ENCODE measurements at regions of chr7 and their contacts with region 1.

Region 1: DNA sequence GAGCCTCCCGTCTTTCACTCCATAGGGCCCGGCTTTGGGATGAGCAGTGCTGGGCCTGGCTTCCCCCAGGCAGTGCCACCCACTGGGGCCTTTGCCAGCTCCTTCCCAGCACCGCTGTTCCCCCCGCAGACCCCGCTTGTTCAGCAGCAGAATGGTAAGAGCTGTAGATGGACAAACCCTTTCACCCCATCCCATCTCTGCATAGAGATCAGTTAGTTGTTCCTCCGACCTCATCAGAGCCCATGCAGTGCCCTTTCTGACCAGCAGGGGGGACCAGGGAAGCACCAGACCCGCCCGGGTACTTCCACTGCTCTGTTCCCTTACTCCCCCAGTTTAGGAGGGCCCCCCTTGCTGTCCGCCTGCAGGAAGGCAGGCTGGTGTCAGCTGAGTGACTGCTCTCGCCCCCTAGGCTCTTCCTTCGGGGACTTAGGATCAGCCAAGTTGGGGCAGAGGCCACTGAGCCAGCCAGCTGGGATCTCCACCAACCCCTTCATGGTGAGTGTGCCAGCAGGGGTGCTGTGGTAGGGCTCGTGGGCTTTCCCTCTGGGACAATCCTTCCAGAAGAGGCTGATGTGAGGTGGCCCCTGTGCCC is 9.8 kb downstream of the SAP25 start:
- DNase-seq: peak; percentile 46 to 89
- H3K4me3 ChIP-seq: no peak overlapping the region
- H3K4me1 ChIP-seq: no peaks in the 10 kb centered on the region
- H3K27me3 ChIP-seq: no peaks in the 10 kb centered on the region

Region 2: DNA sequence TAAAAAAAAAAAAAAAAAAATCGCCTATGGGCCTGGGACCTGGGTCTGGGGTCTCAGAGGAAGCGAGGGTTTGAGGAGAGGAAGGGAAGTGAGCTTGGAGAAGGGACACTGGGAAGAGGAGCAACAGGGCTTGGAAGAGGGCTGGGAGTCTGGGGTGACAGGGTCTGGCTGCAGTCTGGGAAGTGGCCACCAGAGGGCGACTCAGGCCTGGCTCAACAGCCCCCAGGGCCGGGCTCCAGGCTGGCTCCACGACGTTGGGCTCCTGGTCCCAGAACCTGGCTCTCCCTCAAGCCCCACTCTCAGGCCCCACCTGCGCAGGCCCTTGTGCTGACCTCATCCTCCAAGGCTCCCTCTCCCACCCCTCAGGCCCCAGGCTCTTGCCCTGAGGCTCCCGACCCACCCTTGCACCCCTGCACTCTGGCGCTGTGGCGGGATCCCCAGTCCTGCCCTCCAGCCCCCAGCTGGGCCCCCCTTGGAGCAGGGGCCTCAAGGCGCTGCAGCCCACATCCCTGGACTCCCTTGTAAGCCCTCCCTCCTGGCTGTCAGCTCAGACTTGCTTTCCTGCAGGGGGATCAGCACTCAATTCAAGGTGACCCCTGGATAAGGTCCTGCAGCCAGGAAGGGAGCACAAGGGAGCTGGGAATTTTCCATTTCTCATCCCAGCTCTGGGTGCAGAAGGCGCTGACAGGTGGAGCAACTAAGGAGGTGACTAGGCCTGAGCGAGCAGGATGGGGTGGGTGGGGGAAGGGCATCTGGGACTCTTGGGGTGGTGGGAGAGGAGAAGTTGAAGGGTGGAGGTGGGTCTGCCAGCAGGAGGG is 94.5 kb before region 1 on chr7:
- in situ Hi-C with region 1: loop called (anchors 10 kb)
- DNase-seq: peak; percentile 64 to 93
- H3K4me3 ChIP-seq: no peak overlapping the region
- H3K4me1 ChIP-seq: no peaks in the 10 kb centered on the region
- H3K27me3 ChIP-seq: no peaks in the 10 kb centered on the region

Region 3: GRCh38 chr7:101420436-101420835 is 856.5 kb after region 1 on chr7:
- in situ Hi-C with region 1: no loop called
- DNase-seq: peak in 1 of 2 experiments; percentile 77
- H3K4me3 ChIP-seq: no peak overlapping the region
- H3K4me1 ChIP-seq: no peaks in the 10 kb centered on the region
- H3K27me3 ChIP-seq: no peaks in the 10 kb centered on the region